ENCODE measurements at regions of chr7 and their contacts with region 1.

Region 1: DNA sequence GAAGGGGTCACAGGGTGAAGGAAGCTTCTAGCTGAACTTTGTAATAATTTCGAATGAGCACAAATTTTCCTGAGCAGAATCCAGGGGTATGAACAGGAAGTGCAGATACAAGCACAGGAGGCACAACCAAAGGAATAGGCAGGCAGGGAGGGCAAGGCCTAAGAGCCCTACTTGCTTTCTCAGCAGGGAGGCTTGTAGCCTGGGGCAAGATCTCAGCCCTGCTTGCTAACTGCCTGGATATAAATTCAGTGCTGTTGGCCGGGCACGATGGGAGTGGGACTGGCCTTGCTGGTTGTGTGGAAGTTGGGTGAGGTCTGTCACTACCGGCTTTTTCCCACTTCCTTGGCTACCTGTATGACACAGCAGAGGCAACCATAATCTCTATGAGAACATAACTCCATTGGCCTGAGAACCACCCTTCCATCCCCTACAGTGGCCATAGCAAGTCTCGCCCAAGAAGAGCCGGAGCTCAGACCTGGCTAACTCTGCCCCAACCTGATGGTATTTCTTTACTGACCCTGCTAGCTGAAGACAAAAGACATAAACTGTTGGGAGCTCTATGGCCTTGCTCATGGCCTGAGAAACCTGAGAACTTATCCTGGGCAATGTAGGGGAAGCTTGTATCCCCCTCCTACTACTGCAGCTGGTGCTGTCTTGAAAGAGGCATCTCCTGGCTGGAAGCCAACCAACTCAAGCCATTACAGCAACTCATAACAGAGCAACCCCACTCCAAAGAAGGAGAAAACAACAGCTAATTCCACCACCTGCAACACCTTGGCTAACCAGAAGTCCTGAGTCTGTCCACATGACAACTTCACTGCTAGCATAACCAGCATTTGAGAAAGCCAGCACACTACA is 27.6 kb downstream of the CLDN12 start:
- DNase-seq: no peak
- ATAC-seq: no peak
- H3K4me3 ChIP-seq: no peak overlapping the region
- H3K27ac ChIP-seq: no peak overlapping the region
- H3K4me1 ChIP-seq: no peaks in the 10 kb centered on the region
- H3K27me3 ChIP-seq: no peaks in the 10 kb centered on the region
- CTCF ChIP-seq: no peak
- POLR2A ChIP-seq: no peak

Region 2: DNA sequence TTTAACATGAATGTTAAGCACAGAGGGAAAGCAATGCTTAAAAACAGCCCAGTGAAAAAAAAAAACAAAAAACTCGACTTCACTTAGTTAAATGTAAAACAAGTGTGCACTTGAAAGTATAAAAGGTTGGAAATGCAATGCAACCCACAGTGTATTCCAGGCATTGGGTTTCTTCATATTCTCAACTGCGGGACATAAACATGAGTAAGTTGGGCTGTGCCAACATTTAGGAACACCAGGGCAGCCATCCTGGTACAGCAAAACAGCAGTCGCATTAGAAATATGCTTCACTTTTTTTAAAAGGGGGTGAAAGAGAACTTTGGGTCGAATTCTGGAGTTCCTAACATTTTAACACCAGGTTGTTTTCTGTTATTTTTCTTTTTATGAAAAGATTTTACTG is 275.6 kb before region 1 on chr7:
- in situ Hi-C with region 1: loop called (anchors 5 to 25 kb)
- intact Hi-C with region 1: loop called (anchors 2 kb)
- DNase-seq: no peak
- ATAC-seq: no peak
- H3K4me3 ChIP-seq: no peak overlapping the region
- H3K27ac ChIP-seq: no peak overlapping the region
- H3K4me1 ChIP-seq: peaks cover 0 to 10% of the 10 kb centered on the region in 2 donors
- H3K27me3 ChIP-seq: no peaks in the 10 kb centered on the region
- CTCF ChIP-seq: no peak
- POLR2A ChIP-seq: no peak

Region 3: GRCh38 chr7:90165724-90166123 is 265.1 kb before region 1 on chr7:
- in situ Hi-C with region 1: loop called in 3 of 4 experiments (anchors 10 to 25 kb)
- intact Hi-C with region 1: no loop called
- DNase-seq: no peak
- ATAC-seq: no peak
- H3K4me3 ChIP-seq: no peak overlapping the region
- H3K27ac ChIP-seq: no peak overlapping the region
- H3K4me1 ChIP-seq: no peaks in the 10 kb centered on the region
- H3K27me3 ChIP-seq: no peaks in the 10 kb centered on the region
- CTCF ChIP-seq: no peak
- POLR2A ChIP-seq: no peak

Region 4: GRCh38 chr7:90492250-90492649 is 61.4 kb after region 1 on chr7:
- in situ Hi-C with region 1: no loop called
- intact Hi-C with region 1: no loop called
- DNase-seq: no peak
- ATAC-seq: no peak
- H3K4me3 ChIP-seq: no peak overlapping the region
- H3K27ac ChIP-seq: no peak overlapping the region
- H3K4me1 ChIP-seq: no peaks in the 10 kb centered on the region
- H3K27me3 ChIP-seq: no peaks in the 10 kb centered on the region
- CTCF ChIP-seq: no peak
- POLR2A ChIP-seq: no peak

Measured in gastrocnemius medialis (tissue), 4 donors.